GM12878 (cell line): ENCODE measurements at regions of chr14 and their contacts with region 1.

Region 1: GRCh38 chr14:90399541-90400444 is 3.0 kb downstream of the CALM1 start:
- DNase-seq: peak; percentile 68
- ATAC-seq: peak; percentile 76
- H3K4me3 ChIP-seq: peak overlapping the region; percentile 99
- H3K27ac ChIP-seq: peak overlapping the region; percentile 10
- H3K4me1 ChIP-seq: peaks cover 6% of the 10 kb centered on the region
- H3K27me3 ChIP-seq: no peaks in the 10 kb centered on the region; a peak in 1 of 4 replicates
- CTCF ChIP-seq: peak; percentile 99 to 100 (median 100); a peak in 5 of 6 replicates
- EP300 ChIP-seq: no peak
- POLR2A ChIP-seq: peak; percentile 59
- RAD21 ChIP-seq: peak; percentile 65

Region 2: DNA sequence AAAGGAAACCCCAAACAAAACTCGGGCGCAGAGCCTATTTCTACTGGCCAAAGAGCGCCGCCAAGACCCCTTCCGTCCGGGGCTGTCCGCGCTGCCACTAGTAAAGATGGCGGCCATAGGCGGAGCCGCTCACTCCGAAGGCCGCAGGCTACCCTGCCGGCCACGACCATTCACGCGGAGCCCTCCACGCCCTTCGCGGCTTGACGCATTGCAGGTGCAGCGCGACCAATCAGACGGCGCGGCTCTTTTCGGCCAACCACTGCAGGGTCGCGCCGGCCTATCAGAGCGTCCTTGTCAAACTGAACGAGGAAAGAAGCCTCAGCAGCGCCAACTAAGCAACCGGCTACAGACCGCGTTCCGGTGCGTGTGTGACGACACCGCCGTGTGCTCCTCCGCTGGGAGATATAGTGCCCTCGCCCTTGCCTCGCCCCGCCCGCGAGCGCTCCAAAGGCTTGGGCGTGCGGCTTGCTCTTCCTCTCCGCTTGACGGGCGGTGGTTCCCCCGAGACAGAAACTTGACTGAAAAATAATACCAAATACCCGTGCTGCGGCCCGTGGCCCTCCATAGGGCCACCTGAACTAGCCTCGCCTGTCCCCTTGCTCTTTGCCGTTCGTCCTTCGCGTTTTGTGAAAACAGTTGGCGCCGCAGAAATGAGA is 16.6 kb before region 1 on chr14:
- CTCF ChIA-PET with region 1: interaction called, 17 read pairs
- POLR2A ChIA-PET with region 1: interaction called, 43 read pairs
- RAD21 ChIA-PET with region 1: interaction called, 4 read pairs
- SMC1A ChIA-PET with region 1: interaction called, 9 read pairs
- in situ Hi-C with region 1: no loop called
- intact Hi-C with region 1: loop called (anchors 1 kb)
- DNase-seq: peak; percentile 98
- ATAC-seq: peak; percentile 96
- H3K4me3 ChIP-seq: peak overlapping the region; percentile 82
- H3K27ac ChIP-seq: peak overlapping the region; percentile 98
- H3K4me1 ChIP-seq: peaks cover 7% of the 10 kb centered on the region
- H3K27me3 ChIP-seq: no peaks in the 10 kb centered on the region
- CTCF ChIP-seq: no peak
- EP300 ChIP-seq: no peak
- POLR2A ChIP-seq: peak; percentile 91
- RAD21 ChIP-seq: no peak

Region 3: DNA sequence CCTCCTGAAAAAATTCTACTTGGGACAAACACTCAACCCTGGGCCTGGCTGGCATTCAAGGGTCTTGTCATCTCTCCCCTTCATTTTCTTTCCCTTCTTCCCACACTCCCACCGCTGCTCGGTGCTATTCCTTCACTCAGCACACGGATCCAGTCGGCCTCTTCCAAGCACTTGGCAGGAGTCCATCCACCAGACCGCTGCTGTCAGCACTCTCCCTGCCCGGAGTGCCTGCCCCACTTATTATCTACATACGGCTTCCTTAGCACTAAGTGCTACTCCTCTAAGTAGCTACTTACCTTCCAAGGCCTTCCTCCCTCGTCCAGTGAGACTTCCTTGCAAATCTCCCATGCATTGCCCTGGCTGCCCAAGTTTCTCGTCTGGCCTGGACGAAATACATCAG is 26.9 kb after region 1 on chr14:
- CTCF ChIA-PET with region 1: no interaction called
- POLR2A ChIA-PET with region 1: no interaction called
- RAD21 ChIA-PET with region 1: no interaction called
- SMC1A ChIA-PET with region 1: no interaction called
- in situ Hi-C with region 1: no loop called
- intact Hi-C with region 1: no loop called
- DNase-seq: no peak
- ATAC-seq: no peak
- H3K4me3 ChIP-seq: no peak overlapping the region
- H3K27ac ChIP-seq: no peak overlapping the region
- H3K4me1 ChIP-seq: no peaks in the 10 kb centered on the region
- H3K27me3 ChIP-seq: no peaks in the 10 kb centered on the region; a peak in 1 of 4 replicates
- CTCF ChIP-seq: no peak
- EP300 ChIP-seq: no peak
- POLR2A ChIP-seq: no peak
- RAD21 ChIP-seq: no peak

Region 4: GRCh38 chr14:90630171-90630806 is 230.5 kb after region 1 on chr14:
- CTCF ChIA-PET with region 1: no interaction called
- POLR2A ChIA-PET with region 1: interaction called, 14 read pairs
- RAD21 ChIA-PET with region 1: no interaction called
- SMC1A ChIA-PET with region 1: no interaction called
- in situ Hi-C with region 1: no loop called
- intact Hi-C with region 1: no loop called
- DNase-seq: no peak
- ATAC-seq: no peak
- H3K4me3 ChIP-seq: no peak overlapping the region
- H3K27ac ChIP-seq: no peak overlapping the region
- H3K4me1 ChIP-seq: no peaks in the 10 kb centered on the region
- H3K27me3 ChIP-seq: peaks cover 0 to 1% of the 10 kb centered on the region in 2 experiments; a peak in 2 of 4 replicates
- CTCF ChIP-seq: no peak
- EP300 ChIP-seq: no peak
- POLR2A ChIP-seq: no peak
- RAD21 ChIP-seq: no peak

Region 5: GRCh38 chr14:90758028-90758889 is 358.5 kb after region 1 on chr14:
- CTCF ChIA-PET with region 1: interaction called, 10 read pairs
- POLR2A ChIA-PET with region 1: no interaction called
- RAD21 ChIA-PET with region 1: no interaction called
- SMC1A ChIA-PET with region 1: interaction called, 4 read pairs
- in situ Hi-C with region 1: no loop called
- intact Hi-C with region 1: loop called (anchors 5 kb)
- DNase-seq: peak; percentile 62
- ATAC-seq: peak; percentile 98
- H3K4me3 ChIP-seq: peak overlapping the region; percentile 63
- H3K27ac ChIP-seq: peak overlapping the region; percentile 42
- H3K4me1 ChIP-seq: peaks cover 6% of the 10 kb centered on the region
- H3K27me3 ChIP-seq: no peaks in the 10 kb centered on the region; a peak in 1 of 4 replicates
- CTCF ChIP-seq: peak; percentile 76 to 91 (median 87)
- EP300 ChIP-seq: no peak
- POLR2A ChIP-seq: peak; percentile 83
- RAD21 ChIP-seq: peak; percentile 48